Activated T-helper 1 cell treated with anti-CD3 and anti-CD28 coated beads, Interleukin-12 subunit alpha, Interleukin-12 subunit beta, Interleukin-2, Interleukin-4 antibody, amounts not matched to agents 30 ng/mL and 10 ng/mL and 1 ng/mL, durations not matched to agents 14 hours and 24 hours and 36 hours (primary cell): ENCODE measurements at regions of chr5 and their contacts with region 1.

Region 1: GRCh38 chr5:31581498-31582099 is 49.5 kb downstream of the C5orf22 start:
- DNase-seq: no peak
- H3K4me3 Mint-ChIP-seq: no peak overlapping the region
- H3K27ac Mint-ChIP-seq: no peak overlapping the region
- H3K4me1 Mint-ChIP-seq: no peaks in the 10 kb centered on the region
- H3K27me3 Mint-ChIP-seq: peaks cover 9% of the 10 kb centered on the region

Region 2: DNA sequence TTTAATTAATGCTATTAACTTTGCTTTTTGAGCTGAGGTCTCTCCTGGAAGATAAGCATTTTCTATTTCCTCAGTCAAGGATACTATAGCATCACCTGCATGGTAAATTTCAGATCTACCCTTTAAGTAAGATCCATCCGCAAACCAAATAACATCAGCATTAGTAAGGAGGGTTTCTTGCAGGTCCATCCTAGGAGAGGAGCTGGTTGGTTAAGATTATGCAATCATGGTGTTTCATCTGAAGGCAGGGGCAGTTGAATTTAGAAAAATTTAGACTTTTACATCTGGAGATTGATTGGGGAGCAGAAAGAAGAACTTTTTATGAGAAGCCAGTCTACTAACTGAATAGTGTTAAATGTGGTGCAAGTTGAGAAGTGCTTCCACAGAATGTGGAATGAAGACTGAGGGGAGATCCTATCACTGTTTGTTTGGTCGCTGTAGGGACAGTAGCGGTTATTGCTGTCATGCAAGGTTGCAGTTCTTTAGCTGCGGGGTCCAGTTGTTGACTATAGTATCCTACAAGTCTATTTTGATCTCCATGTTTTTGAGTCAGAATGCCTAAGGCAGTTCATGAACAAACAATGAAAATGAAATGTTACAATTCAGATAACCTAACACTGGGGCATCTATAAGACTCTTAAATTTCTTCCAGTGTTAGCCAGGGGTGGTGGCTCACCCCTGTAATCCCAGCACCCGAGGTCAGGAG is 11.9 kb after region 1 on chr5:
- intact Hi-C with region 1: no loop called
- DNase-seq: no peak
- H3K4me3 Mint-ChIP-seq: no peak overlapping the region
- H3K27ac Mint-ChIP-seq: no peak overlapping the region
- H3K4me1 Mint-ChIP-seq: no peaks in the 10 kb centered on the region
- H3K27me3 Mint-ChIP-seq: peaks cover 7% of the 10 kb centered on the region

Region 3: GRCh38 chr5:31825518-31826068 is 244.0 kb after region 1 on chr5:
- intact Hi-C with region 1: loop called (anchors 1 kb)
- DNase-seq: peak; percentile 5
- H3K4me3 Mint-ChIP-seq: no peak overlapping the region
- H3K27ac Mint-ChIP-seq: no peak overlapping the region
- H3K4me1 Mint-ChIP-seq: peaks cover 4% of the 10 kb centered on the region
- H3K27me3 Mint-ChIP-seq: peaks cover 3% of the 10 kb centered on the region

Region 4: DNA sequence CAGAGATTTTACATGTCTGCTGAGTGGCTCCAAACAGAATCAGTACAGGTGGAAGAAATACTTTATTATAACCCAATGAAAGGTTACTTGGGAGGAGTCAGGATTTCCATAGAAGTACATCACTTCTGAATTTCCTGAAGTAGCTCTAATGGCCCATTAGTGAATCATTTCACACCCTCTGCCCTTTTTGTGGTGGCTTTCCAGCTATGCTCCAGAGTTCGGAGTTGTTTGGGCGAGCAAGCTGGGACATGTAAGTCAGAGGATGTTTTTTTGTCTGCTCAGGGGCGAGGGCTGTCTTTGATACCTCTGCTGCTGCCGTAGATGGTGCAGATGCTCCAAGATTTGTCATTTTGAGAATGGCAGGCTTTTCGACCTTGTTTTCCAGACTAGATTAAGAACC is 366.4 kb after region 1 on chr5:
- intact Hi-C with region 1: no loop called
- DNase-seq: no peak
- H3K4me3 Mint-ChIP-seq: no peak overlapping the region
- H3K27ac Mint-ChIP-seq: no peak overlapping the region
- H3K4me1 Mint-ChIP-seq: no peaks in the 10 kb centered on the region
- H3K27me3 Mint-ChIP-seq: no peaks in the 10 kb centered on the region

Region 5: GRCh38 chr5:32076699-32077695 is 495.4 kb after region 1 on chr5:
- intact Hi-C with region 1: loop called (anchors 1 kb)
- DNase-seq: no peak
- H3K4me3 Mint-ChIP-seq: no peak overlapping the region
- H3K27ac Mint-ChIP-seq: no peak overlapping the region
- H3K4me1 Mint-ChIP-seq: no peaks in the 10 kb centered on the region
- H3K27me3 Mint-ChIP-seq: no peaks in the 10 kb centered on the region

Region 6: DNA sequence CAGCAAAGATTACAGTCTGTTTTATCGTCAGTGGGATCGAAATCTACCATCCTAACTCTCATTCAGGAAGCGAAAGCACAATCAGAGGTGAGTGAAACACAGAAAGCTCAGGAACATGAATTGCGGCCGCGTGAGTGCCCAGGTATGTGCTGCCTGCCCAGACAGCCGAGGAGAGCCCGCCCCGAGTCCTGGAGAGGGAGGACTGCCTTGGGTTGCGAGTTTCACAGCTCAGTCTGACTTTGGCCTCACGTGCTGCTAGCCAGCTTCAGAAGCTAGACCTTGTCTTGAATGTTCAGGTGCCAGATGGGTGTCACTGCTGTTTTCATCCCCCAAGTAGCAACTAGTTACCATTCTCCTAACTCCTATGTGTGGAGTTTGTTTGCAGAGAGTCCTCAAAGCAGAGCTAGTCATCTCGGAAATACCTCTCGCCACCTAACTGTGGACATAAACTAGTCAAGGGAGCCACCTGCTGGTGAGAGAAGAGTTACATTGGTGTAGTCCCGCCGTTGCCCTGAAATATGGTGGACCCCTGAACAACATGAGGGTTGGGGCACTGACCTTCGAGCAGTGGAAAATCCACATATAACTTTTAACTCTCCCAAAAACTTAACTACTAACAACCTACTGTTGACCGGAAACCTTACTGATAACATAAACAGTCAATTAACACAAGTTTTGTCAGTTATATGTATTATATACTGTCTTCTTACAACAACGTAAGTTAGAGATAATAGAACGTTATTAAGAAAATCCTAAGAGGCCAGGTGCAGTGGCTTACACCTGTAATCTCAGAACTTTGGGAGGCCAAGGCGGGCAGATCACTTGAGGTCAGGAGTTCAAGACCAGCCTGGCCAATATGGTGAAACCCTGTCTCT is 511.6 kb after region 1 on chr5:
- intact Hi-C with region 1: loop called (anchors 1 kb)
- DNase-seq: peak; percentile 38
- H3K4me3 Mint-ChIP-seq: no peak overlapping the region
- H3K27ac Mint-ChIP-seq: no peak overlapping the region
- H3K4me1 Mint-ChIP-seq: no peaks in the 10 kb centered on the region
- H3K27me3 Mint-ChIP-seq: no peaks in the 10 kb centered on the region